AG04450 (cell line): ENCODE measurements at regions of chr6 and their contacts with region 1.

Region 1: DNA sequence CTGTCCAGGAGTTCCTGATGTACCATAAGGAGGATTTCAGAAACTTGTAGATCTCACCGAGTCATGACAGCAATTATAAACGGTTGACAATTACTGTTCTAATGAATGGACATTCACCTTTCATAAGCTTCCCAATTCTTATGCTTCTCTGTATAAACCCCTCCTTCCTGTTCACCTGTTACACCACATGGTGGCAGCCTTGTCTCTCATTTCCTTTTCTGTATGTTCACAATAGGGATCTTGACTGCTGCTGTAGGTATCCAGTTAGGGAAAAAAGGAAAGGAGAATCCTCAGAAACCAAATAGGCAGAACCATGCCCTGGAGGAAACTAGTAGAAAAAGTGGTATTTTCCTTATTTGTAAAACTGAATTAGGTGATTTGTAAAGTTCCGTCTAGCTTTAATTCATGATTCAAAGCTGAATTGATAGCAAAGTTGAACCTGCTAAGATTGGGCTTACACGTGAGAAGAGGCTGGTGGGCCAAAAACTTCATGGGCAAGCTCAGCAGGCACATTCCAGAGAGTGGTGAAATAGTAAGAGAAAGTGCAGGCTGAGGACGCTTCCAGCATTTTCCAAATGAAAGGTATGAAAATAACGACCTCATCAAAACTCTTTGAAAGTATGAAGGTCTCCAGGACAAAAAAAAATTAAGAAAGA is 29.0 kb upstream of the TBPL1 start:
- DNase-seq: peak; percentile 59
- H3K4me3 ChIP-seq: no peak overlapping the region
- H3K27ac ChIP-seq: no peak overlapping the region
- H3K27me3 ChIP-seq: no peaks in the 10 kb centered on the region
- CTCF ChIP-seq: peak; percentile 88

Region 2: DNA sequence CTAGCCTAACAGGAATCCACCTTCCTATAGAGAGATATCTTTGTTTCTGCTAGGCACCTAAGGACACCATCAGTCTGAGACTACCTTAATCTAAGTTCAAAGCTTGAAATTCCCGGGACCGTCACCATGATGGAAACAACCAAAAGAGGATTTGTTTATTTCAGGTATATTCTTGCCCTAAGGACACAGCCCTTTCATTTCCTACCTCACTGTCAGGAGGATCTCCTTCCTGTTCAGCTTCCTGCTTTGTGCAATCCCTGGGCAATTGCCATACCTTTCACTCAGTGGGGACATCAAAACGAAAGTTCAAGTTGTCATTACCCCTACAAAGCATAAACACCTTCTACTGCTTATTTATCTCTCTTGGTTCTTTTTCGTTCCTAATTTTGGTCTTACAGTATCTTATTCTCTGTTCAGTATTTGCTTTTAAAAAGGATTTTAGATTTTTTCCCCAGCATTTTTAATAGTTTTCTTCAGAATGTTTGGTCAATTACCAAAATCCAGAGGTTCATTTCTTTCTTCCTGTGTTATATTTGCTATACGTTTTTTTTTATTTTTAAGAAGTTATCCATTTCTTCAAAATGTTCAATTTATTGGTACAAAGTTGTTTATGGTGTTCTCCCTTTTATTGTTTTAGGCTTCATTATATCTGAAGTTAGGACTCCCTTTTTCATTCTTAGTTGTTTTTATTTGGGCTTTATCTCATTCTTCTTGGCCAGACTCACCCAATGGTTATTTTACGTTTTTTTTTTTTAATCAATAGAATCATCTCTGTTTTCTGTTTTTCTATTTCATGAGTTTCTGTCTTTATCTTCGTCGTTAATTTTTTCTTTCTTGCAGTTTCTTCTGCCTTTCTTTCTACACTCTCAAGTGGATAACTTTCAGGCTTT is 16.0 kb after region 1 on chr6:
- CTCF ChIA-PET with region 1: interaction called, 10 read pairs
- POLR2A ChIA-PET with region 1: no interaction called
- DNase-seq: no peak
- H3K4me3 ChIP-seq: no peak overlapping the region
- H3K27ac ChIP-seq: no peak overlapping the region
- H3K27me3 ChIP-seq: no peaks in the 10 kb centered on the region
- CTCF ChIP-seq: no peak

Region 3: DNA sequence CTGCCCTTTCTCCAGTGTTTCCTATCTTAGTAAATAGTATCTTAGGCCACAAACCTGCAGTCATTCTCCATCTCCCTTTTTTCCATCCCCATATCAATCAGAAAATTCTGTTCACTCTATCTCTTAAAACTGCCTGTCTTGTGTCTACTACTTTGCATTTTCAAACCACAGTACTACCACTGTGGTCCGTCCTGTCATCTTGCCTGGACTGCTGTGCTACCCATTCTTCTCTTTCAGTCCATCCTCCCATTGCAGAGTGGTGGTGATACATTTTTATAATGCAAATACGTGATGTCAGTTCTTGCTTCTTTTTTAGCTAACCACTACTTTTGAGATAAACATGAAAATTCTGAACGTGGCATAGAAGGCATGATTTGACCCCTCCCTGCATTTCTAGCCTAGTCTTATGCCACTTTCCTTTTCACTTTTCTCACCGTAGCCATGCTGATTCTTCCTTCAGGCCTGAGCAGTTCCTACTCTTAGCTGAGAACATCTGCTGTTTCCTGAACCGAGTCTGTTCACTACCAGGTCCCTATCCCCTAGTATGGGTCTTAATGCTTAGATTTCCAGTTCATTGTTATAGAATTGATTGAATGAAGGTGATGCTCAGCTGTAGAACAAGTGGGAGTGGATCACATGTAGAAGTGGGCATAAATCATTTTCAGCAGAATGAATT is 42.7 kb after region 1 on chr6:
- CTCF ChIA-PET with region 1: interaction called, 14 read pairs
- POLR2A ChIA-PET with region 1: no interaction called
- DNase-seq: no peak
- H3K4me3 ChIP-seq: no peak overlapping the region
- H3K27ac ChIP-seq: no peak overlapping the region
- H3K27me3 ChIP-seq: no peaks in the 10 kb centered on the region
- CTCF ChIP-seq: no peak

Region 4: GRCh38 chr6:134080171-134080795 is 156.2 kb after region 1 on chr6:
- CTCF ChIA-PET with region 1: interaction called, 13 read pairs
- POLR2A ChIA-PET with region 1: no interaction called
- DNase-seq: no peak
- H3K4me3 ChIP-seq: no peak overlapping the region
- H3K27ac ChIP-seq: no peak overlapping the region
- H3K27me3 ChIP-seq: peaks cover 6% of the 10 kb centered on the region
- CTCF ChIP-seq: no peak